HCT116 (cell line): ENCODE measurements at regions of chr3 and their contacts with region 1.

Region 1: DNA sequence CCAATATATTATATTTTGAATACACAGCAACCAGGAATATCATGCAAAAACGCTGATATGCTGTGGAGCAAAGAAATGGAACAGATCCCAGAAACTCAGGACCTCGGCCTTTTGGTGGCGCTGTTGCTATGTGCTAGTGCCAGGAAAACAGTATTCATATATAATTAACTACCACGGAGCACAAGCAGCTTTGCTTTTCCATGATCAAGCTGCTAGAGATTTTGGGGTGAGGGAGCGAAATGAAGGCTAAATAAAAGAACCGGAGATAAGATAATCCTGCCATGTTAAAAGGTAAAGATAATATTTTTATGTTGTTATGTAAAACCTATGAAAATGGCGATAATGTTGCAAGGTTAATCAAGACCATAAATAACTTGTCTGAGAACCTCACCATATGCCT is 157.7 kb upstream of the FAM3D start:
- DNase-seq: peak; percentile 42
- ATAC-seq: peak; percentile 84
- H3K4me3 ChIP-seq: no peak overlapping the region
- H3K27ac ChIP-seq: no peak overlapping the region
- H3K4me1 ChIP-seq: no peaks in the 10 kb centered on the region
- H3K27me3 ChIP-seq: no peaks in the 10 kb centered on the region
- CTCF ChIP-seq: peak; percentile 53 to 90 (median 84); a peak in 5 of 6 replicates
- POLR2A ChIP-seq: no peak
- RAD21 ChIP-seq: peak; percentile 89

Region 2: DNA sequence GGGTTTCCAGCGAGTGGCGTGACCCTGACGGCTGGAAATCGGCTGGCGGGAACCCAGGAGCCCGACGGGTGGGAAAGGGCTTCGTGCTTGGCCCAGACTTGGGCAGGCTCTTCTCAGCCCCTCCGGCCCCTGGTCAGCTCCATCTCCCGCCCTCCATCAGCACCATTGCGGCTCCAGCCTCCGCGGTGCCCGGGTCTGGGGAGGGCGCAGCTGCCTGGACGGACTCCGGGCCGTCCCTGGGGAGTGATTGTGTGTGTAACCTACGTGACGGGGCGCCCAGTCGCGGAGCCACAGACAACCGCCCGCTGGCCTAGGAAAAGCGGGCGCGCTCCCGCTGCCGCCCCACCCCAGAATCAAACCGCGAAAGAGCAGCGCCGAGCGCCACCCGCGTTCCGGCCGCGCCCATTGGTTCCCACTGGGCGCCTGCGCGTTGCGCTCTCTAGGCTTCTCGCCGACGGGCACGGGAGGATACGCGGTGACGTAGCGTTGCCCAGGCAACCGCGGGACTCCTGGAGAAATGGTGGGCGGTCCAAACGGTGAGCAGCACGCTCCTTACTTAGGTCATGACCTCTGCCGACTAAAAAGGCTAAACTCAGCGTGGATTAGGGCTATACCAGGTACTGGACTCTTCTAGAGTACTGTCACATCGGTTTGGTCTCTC is 225.5 kb after region 1 on chr3 and contains the start of gene CFAP20DC:
- CTCF ChIA-PET with region 1: interaction called, 9 read pairs
- POLR2A ChIA-PET with region 1: no interaction called
- RAD21 ChIA-PET with region 1: no interaction called
- intact Hi-C with region 1: loop called (anchors 1 kb)
- DNase-seq: peak; percentile 85
- ATAC-seq: peak; percentile 98
- H3K4me3 ChIP-seq: peak within 1 kb of the TSS; percentile 63 to 68
- H3K27ac ChIP-seq: peak within 1 kb of the TSS; percentile 42; the same call in 1 of the 2 replicates
- H3K4me1 ChIP-seq: peaks cover 8 to 28% of the 10 kb centered on the region in 2 experiments; a peak in 3 of 4 replicates
- H3K27me3 ChIP-seq: no peaks in the 10 kb centered on the region
- CTCF ChIP-seq: no peak
- POLR2A ChIP-seq: peak; percentile 95
- RAD21 ChIP-seq: no peak
- total RNA-seq, gene CFAP20DC: 2.9 TPM